Caco-2 (cell line): ENCODE measurements at regions of chr19 and their contacts with region 1.

Region 1: DNA sequence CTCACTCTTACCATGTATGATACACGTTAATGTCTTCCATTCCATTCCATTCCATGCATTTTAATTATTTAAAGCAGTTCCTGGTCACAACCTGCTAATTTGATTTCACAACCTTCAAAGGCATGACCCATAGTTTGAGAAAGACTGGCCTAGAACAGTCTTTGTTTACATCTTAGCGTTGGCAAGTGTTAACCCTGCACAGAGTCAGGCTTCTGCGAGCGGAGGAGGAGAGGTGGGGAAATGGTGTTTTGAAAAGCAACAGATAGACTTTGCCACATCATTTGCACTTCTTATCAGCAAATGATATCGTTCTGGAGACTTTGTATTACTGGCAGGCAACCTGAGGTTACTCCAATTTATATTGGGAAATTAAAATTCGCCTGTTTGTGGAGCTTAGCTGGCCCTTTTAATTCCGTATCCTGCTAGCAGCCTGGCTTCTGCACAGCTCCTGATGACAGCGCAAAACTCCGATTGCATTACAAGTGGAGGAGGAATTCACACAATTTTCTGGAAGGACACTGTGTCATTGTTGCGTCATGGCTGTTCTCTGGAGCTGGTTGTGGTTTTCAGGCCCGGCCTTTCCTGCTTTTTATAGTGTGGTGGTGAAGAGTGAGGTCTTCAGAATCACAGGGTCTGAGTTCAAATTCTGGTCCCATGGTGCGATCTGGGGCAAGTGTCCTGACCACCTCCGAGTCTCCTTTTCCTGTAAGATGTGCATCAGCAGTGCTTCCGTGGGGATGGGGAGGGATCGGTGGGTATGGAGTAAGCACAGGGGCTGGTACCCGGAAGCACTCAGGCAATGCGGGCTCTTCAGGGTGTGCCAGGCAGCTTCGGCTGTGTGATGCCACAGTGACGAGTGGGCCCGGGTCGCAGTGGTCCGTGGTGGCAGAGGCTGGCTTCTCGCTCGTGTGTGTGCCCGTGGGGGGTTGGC is 49.1 kb upstream of the EHD2 start:
- DNase-seq: peak; percentile 73
- H3K4me3 ChIP-seq: no peak overlapping the region
- H3K4me3 Mint-ChIP-seq: peak overlapping the region; percentile 53
- H3K27ac Mint-ChIP-seq: peak overlapping the region; percentile 94
- H3K4me1 ChIP-seq: peaks cover 94% of the 10 kb centered on the region
- H3K4me1 Mint-ChIP-seq: peaks cover 65% of the 10 kb centered on the region
- H3K27me3 ChIP-seq: no peaks in the 10 kb centered on the region
- H3K27me3 Mint-ChIP-seq: no peaks in the 10 kb centered on the region
- CTCF ChIP-seq: no peak

Region 2: GRCh38 chr19:47623921-47624391 is 40.1 kb before region 1 on chr19:
- CTCF ChIA-PET with region 1: interaction called, 4 read pairs
- POLR2A ChIA-PET with region 1: interaction called, 31 read pairs
- intact Hi-C with region 1: loop called (anchors 1 kb)
- DNase-seq: peak; percentile 94 to 96
- H3K4me3 ChIP-seq: no peak overlapping the region
- H3K4me3 Mint-ChIP-seq: peak overlapping the region; percentile 67
- H3K27ac Mint-ChIP-seq: peak overlapping the region; percentile 84
- H3K4me1 ChIP-seq: peaks cover 82% of the 10 kb centered on the region
- H3K4me1 Mint-ChIP-seq: peaks cover 50% of the 10 kb centered on the region
- H3K27me3 ChIP-seq: no peaks in the 10 kb centered on the region
- H3K27me3 Mint-ChIP-seq: no peaks in the 10 kb centered on the region
- CTCF ChIP-seq: no peak

Region 3: GRCh38 chr19:47790398-47790814 is 126.3 kb after region 1 on chr19:
- CTCF ChIA-PET with region 1: no interaction called
- POLR2A ChIA-PET with region 1: no interaction called
- intact Hi-C with region 1: no loop called
- DNase-seq: peak; percentile 88 to 89
- H3K4me3 ChIP-seq: no peak overlapping the region
- H3K4me3 Mint-ChIP-seq: no peak overlapping the region
- H3K27ac Mint-ChIP-seq: no peak overlapping the region
- H3K4me1 ChIP-seq: no peaks in the 10 kb centered on the region
- H3K4me1 Mint-ChIP-seq: no peaks in the 10 kb centered on the region
- H3K27me3 ChIP-seq: no peaks in the 10 kb centered on the region
- H3K27me3 Mint-ChIP-seq: no peaks in the 10 kb centered on the region
- CTCF ChIP-seq: peak; percentile 85 to 88

Region 4: GRCh38 chr19:47842941-47843340 is 178.8 kb after region 1 on chr19:
- CTCF ChIA-PET with region 1: no interaction called
- POLR2A ChIA-PET with region 1: no interaction called
- intact Hi-C with region 1: no loop called
- DNase-seq: no peak
- H3K4me3 ChIP-seq: no peak overlapping the region
- H3K4me3 Mint-ChIP-seq: no peak overlapping the region
- H3K27ac Mint-ChIP-seq: no peak overlapping the region
- H3K4me1 ChIP-seq: no peaks in the 10 kb centered on the region
- H3K4me1 Mint-ChIP-seq: no peaks in the 10 kb centered on the region
- H3K27me3 ChIP-seq: no peaks in the 10 kb centered on the region
- H3K27me3 Mint-ChIP-seq: peaks cover 7% of the 10 kb centered on the region
- CTCF ChIP-seq: no peak